Ovary (tissue), 10 donors: ENCODE measurements at regions of chr15 and their contacts with region 1.

Region 1: DNA sequence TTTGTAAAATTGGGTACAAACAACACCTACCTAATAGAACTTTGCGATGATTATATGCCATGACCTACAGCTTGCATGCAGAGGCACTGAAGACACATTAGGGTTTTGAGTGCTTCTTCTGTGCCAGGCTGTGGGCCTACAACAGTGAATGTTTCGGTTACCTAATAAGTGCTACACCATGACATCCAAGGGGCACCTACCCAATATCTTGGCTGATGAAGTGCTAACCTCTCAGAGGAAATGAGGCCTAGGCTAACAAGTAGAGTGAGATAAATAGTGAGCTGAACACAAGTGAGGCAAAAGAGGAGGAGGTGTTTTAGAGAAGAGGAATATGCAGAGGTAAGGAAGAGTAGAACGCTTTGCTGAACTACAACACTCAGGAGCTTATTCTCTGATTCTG is 12.2 kb upstream of the RASGRP1 start:
- DNase-seq: no peak
- H3K4me3 ChIP-seq: no peak overlapping the region
- H3K27ac ChIP-seq: no peak overlapping the region
- H3K4me1 ChIP-seq: no peaks in the 10 kb centered on the region
- H3K27me3 ChIP-seq: no peaks in the 10 kb centered on the region
- CTCF ChIP-seq: no peak
- EP300 ChIP-seq: no peak
- POLR2A ChIP-seq: no peak

Region 2: GRCh38 chr15:38551720-38552648 is 24.9 kb before region 1 on chr15:
- intact Hi-C with region 1: loop called in 1 of 4 experiments (anchors 2 kb)
- DNase-seq: no peak
- H3K4me3 ChIP-seq: no peak overlapping the region
- H3K27ac ChIP-seq: no peak overlapping the region
- H3K4me1 ChIP-seq: no peaks in the 10 kb centered on the region
- H3K27me3 ChIP-seq: no peaks in the 10 kb centered on the region
- CTCF ChIP-seq: no peak
- EP300 ChIP-seq: no peak
- POLR2A ChIP-seq: no peak